Panc1 (cell line): ENCODE measurements at regions of chr1 and their contacts with region 1.

Region 1: GRCh38 chr1:27300341-27301051 is 21.5 kb upstream of the TMEM222 start:
- DNase-seq: peak; percentile 75
- ATAC-seq: peak; percentile 96
- H3K4me3 ChIP-seq: no peak overlapping the region
- H3K27ac ChIP-seq: no peak overlapping the region
- H3K4me1 ChIP-seq: peaks cover 2% of the 10 kb centered on the region; the same call in 1 of the 2 replicates
- H3K27me3 ChIP-seq: no peaks in the 10 kb centered on the region
- CTCF ChIP-seq: peak; percentile 97

Region 2: GRCh38 chr1:26970810-26971209 is 329.7 kb before region 1 on chr1:
- CTCF ChIA-PET with region 1: interaction called, 10 read pairs
- POLR2A ChIA-PET with region 1: no interaction called
- in situ Hi-C with region 1: no loop called
- intact Hi-C with region 1: no loop called
- DNase-seq: no peak
- ATAC-seq: no peak
- H3K4me3 ChIP-seq: no peak overlapping the region
- H3K27ac ChIP-seq: no peak overlapping the region
- H3K4me1 ChIP-seq: 0 out of 2 replicates have a peak, but pooled peaks cover 3% of the 10 kb centered on the region
- H3K27me3 ChIP-seq: no peaks in the 10 kb centered on the region
- CTCF ChIP-seq: no peak

Region 3: DNA sequence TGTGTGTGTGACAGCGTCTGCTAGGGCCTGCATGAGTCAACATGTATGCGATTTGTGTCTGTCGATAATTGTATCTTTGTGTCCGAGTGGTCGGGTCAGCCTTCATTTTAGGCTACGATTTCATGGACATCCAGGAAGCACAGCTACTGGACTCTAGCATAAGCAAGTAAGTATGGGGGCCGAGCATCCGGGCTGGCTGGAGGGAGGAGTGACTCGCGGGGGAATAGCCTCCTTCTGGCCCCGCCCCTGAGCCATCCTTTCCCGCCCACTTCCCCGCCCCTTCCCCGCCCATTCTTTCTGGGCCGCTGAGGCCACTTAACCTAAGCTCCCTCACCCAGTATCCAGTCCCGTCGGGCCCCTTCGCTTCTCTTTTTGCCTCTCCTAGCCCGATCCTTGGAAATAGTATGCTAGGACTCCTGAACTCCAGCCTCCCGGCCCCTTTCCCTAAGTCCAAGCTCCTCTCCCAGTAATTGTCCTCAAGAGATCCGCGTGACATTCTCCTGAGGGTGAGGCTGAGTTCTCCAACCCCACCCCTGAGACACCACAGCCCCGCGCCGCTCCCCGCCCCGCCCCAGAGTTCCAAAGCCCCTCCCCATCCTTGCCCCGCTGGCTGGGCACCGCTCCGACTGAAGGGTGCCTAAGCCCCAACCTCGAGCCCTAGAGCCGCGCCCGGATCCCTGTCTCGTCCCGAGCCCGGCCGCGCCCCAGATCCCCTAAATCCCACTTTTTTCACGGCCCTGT is 65.0 kb after region 1 on chr1:
- CTCF ChIA-PET with region 1: interaction called, 16 read pairs
- POLR2A ChIA-PET with region 1: interaction called, 3 read pairs
- in situ Hi-C with region 1: no loop called
- intact Hi-C with region 1: no loop called
- DNase-seq: peak; percentile 87
- ATAC-seq: peak; percentile 86
- H3K4me3 ChIP-seq: peak overlapping the region; percentile 74 to 77
- H3K27ac ChIP-seq: peak overlapping the region; percentile 82
- H3K4me1 ChIP-seq: peaks cover 15% of the 10 kb centered on the region
- H3K27me3 ChIP-seq: no peaks in the 10 kb centered on the region
- CTCF ChIP-seq: no peak

Region 4: DNA sequence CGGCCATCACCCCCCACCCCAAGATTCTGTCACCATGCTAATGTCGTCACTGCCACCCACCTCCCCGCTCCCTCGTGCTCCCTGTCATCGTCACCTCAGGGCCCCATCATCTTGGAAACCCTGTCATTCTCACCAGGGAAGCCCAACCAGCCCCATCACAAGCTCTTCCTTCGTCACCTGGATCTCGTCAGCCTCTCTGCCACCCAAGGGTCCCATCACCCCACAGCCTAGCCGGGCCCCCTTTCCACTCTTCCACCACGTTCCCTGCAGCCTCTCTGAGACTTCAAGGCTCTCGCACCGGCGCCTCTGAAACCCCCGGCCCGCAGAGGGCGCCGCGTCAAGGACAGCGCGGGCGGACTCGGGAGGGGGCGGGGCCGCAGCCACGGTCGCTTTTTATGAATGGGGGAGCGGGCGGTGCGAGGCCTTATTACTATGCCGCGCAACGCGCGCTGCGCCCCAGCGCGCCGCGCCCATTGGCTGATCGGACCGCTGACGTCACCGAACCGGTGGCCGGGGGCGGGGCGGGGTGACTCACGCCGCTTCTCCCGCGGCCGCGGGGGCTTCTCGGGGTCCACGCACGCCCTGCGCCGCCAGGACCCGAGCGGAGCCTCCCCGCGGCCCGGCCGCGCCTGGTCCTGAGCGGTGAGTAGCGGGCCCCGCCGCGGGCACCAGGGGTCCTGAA is 91.7 kb after region 1 on chr1 and contains the start of gene GPR3:
- CTCF ChIA-PET with region 1: interaction called, 10 read pairs
- POLR2A ChIA-PET with region 1: interaction called, 7 read pairs
- in situ Hi-C with region 1: no loop called
- intact Hi-C with region 1: loop called (anchors 2 kb)
- DNase-seq: no peak
- ATAC-seq: peak; percentile 96
- H3K4me3 ChIP-seq: peak within 1 kb of the TSS; percentile 65 to 71
- H3K27ac ChIP-seq: peak within 1 kb of the TSS; percentile 69
- H3K4me1 ChIP-seq: peaks cover 6% of the 10 kb centered on the region
- H3K27me3 ChIP-seq: no peaks in the 10 kb centered on the region
- CTCF ChIP-seq: peak; percentile 86
- total RNA-seq, gene GPR3: 0.95 TPM